Activated CD8-positive, alpha-beta memory T cell treated with anti-CD3 and anti-CD28 coated beads, Interleukin-2, amount 10 ng/mL, durations not matched to agents 7 days and 5 days (primary cell): ENCODE measurements at regions of chrX and their contacts with region 1.

Region 1: DNA sequence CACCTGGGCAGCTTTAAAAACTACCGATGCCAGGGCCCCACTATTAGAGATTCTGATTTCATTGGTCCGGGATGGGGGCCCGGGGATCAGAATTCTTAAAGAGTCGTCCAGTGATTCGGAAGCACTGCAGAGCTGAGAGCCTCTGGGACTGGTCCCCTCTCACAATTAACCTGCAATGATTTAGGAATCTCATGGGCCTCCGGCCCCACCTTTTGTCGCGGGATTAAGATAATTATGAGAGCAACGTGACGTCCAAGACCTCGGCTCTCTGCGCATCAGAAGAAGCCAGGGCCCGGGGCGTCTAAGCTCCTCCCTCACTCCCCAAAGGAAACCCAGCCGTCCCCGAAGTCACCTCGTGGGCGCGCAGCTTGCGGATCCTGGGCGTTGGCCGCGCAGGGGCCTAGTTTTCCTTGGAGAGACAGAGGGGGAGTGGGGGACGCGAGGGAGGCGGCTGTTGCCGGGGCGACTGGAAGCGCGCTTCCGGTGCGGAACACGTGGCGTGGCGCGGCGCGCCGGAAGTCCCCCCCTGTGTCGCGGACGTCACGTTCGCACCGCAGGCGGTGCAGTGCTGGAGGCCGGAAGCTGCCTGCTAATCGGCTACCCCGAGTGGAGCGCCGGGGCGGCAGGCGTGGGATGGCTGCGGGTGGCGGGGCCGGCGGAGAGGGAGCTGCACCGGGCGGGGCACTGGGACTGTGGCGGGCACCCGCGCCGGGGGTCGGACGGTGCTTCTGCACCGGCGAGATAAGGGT is at the start of gene GEMIN8:
- DNase-seq: peak; percentile 90
- ATAC-seq: peak; percentile 94
- H3K4me3 Mint-ChIP-seq: peak within 1 kb of the TSS; percentile 85
- H3K27ac Mint-ChIP-seq: peak within 1 kb of the TSS; percentile 96
- H3K4me1 Mint-ChIP-seq: peaks cover 36% of the 10 kb centered on the region
- H3K27me3 Mint-ChIP-seq: peaks cover 1% of the 10 kb centered on the region
- total RNA-seq, gene GEMIN8: 11.7 to 12.7 TPM

Region 2: GRCh38 chrX:13506574-13506973 is 523.0 kb before region 1 on chrX:
- CTCF ChIA-PET with region 1: interaction called, 12 read pairs
- DNase-seq: peak; percentile 52
- ATAC-seq: no peak
- H3K4me3 Mint-ChIP-seq: no peak overlapping the region
- H3K27ac Mint-ChIP-seq: no peak overlapping the region
- H3K4me1 Mint-ChIP-seq: peaks cover 14% of the 10 kb centered on the region
- H3K27me3 Mint-ChIP-seq: no peaks in the 10 kb centered on the region